Activated CD8-positive, alpha-beta T cell treated with anti-CD3 and anti-CD28 coated beads, Interleukin-2, amount 10 ng/mL, durations not matched to agents 7 days and 5 days (primary cell): ENCODE measurements at regions of chr4 and their contacts with region 1.

Region 1: DNA sequence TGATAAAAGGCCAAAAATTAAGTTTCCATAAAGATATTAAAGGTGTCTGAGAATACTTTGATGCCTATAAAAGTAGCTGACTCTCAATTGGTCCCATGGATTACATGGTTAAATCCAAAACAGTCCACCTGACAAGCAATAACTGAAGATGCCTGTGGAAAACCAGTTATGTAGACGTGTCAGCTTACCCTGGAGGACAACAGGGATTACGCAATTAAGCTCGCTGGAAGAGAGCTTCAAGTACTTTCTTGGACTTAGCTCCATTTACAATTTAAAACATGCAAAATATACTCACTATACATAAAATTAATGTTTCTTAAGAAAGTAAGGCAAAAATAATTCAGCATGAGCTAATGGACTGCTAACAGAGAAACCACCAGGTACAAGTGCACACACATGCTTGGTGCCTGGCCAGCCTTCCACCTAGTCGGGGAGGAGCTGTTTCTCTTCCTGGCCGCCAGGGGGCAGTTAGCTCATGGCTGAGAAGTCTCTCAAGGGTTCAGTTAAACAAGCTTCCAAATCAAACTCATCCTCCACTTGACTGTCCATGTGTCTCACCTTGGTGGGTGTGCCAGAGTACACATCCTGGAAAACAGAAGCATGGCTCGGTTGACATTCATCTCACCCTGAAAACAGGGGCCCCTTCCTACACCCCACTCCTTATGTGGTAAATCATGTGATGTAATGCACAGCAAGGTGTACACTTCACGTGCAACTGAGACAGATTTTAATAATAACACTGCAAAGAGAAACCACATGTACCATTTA is 9.2 kb upstream of the FAM53A start:
- DNase-seq: peak; percentile 84
- ATAC-seq: peak; percentile 95
- H3K4me3 Mint-ChIP-seq: no peak overlapping the region
- H3K27ac Mint-ChIP-seq: peak overlapping the region; percentile 54
- H3K4me1 Mint-ChIP-seq: peaks cover 10% of the 10 kb centered on the region
- H3K27me3 Mint-ChIP-seq: no peaks in the 10 kb centered on the region

Region 2: DNA sequence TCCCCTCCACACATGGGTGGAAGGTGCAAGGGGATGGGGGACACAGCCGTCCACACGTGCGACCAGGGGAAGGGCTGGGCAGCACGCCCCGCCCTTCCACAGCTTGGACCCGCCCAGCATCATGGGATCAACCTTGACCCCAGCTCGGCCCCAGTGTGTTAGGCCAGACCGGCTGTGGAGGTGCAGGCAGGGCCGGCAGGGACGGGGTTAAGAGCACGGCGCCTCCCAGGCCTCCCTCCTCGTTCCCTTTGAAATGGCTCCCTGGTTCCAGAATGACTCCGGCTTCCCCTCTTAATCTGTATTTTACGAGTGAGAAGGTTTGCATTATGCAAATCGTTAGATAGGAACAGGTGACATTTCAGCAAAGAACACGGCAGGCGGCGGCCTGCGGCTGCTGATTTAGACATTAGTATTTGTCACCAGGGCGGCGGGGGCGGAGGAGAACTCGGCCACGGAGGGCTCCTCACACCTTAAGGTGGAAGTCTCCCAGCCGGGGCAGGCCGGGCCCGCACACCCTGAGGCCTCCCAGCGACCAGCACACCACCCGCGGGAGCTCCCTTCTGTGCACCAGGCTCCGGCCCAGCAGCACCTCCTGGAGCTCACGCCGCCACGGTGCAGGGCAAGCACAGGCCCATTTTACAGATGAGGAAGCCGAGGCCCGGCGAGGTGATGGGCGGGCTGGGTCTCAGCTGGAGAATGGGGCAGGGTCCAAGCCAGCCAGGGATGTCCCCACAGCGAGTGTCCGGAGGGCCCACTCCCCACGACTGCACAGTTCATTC is 125.3 kb before region 1 on chr4:
- CTCF ChIA-PET with region 1: no interaction called
- POLR2A ChIA-PET with region 1: no interaction called
- DNase-seq: no peak
- ATAC-seq: no peak
- H3K4me3 Mint-ChIP-seq: no peak overlapping the region
- H3K27ac Mint-ChIP-seq: no peak overlapping the region
- H3K4me1 Mint-ChIP-seq: peaks cover 3% of the 10 kb centered on the region
- H3K27me3 Mint-ChIP-seq: no peaks in the 10 kb centered on the region

Region 3: DNA sequence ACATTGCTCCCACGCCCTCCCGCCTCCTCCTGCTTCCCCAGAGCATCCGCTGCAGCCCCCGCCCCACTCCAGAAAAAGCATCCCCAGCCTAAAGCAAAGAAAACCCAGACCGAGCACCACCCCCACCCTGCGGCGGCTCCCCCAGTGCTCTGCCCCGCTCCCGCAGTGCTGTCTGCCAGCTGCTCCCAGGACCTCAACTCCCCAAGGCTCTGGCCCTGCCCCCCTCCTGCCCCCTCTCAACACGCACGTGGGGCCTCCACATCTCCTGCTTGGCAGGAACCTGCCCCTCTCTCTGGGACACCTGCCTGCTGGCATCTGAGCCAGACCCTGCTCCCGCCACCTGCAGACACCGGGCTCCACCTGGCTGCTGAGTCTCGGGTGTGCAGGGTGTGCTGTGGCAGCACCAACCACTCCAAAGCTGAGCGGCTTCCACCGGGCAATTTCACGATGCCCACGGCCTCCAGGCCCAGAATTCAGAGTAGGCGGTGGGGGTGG is 88.6 kb before region 1 on chr4:
- CTCF ChIA-PET with region 1: interaction called, 10 read pairs
- POLR2A ChIA-PET with region 1: no interaction called
- DNase-seq: peak; percentile 72
- ATAC-seq: peak; percentile 75
- H3K4me3 Mint-ChIP-seq: peak overlapping the region; percentile 72
- H3K27ac Mint-ChIP-seq: peak overlapping the region; percentile 90
- H3K4me1 Mint-ChIP-seq: peaks cover 21% of the 10 kb centered on the region
- H3K27me3 Mint-ChIP-seq: no peaks in the 10 kb centered on the region

Region 4: DNA sequence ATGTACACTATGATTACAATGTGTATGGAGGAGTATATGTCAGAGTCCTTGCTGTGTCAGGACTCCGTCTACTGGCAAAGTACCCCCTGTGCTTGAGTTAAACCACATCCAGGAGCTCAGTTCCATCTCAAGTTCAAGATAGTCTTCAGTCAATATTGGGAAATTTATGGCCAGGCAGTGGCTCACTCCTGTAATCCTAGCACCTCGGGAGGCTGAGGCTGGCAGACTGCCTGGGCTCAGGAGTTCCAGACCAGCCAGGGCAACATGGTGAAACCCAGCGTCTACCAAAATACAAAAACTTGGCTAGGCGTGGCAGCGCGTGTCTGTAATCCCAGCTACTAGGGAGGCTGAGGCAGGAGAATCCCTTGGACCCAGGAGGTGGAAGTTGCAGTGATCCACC is 13.0 kb after region 1 on chr4:
- CTCF ChIA-PET with region 1: interaction called, 131 read pairs
- POLR2A ChIA-PET with region 1: interaction called, 17 read pairs
- DNase-seq: no peak
- ATAC-seq: no peak
- H3K4me3 Mint-ChIP-seq: no peak overlapping the region
- H3K27ac Mint-ChIP-seq: no peak overlapping the region
- H3K4me1 Mint-ChIP-seq: peaks cover 73% of the 10 kb centered on the region
- H3K27me3 Mint-ChIP-seq: no peaks in the 10 kb centered on the region

Region 5: DNA sequence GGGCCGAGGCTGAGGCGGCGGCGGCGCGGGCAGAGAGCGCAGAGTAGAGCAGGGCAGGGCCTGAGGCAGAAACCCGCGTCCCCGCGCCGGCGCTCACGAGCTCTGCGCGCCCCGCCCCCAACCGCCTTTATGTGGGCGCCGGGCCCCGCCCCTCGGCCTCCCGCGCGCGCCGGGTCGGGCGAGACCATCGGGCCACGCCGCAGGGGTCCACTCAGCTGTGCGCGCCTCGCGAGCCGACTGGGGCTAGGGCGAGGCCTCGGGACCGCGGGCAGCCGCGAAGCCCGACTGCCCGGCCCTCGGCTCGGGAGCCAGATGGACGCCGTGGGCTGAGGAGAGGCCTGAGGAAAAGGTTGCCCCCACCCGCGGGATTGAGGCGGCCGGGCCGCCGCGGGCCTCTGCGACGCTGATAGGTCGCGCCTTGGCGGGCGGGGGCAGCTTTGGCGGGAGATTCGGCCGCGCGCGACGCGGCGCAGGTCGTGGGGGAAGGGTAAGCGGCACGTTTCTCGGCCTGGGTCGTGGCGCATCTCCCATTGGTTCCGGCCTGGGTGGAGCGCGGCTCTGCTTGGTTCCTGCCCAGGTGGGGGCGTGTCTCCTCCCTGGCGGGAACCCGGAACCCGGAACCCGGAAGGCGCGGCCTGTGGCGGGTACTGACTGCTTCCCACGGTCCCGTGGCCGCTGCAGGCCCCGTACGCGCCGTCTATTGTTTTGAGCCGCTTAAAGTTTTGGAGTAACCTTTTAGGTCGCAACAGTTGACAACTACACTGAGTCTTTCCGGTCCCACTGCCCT is 19.1 kb after region 1 on chr4 and contains the start of gene SLBP:
- CTCF ChIA-PET with region 1: interaction called, 131 read pairs
- POLR2A ChIA-PET with region 1: interaction called, 17 read pairs
- DNase-seq: peak; percentile 99
- ATAC-seq: peak; percentile 90
- H3K4me3 Mint-ChIP-seq: peak within 1 kb of the TSS; percentile 99
- H3K27ac Mint-ChIP-seq: peak within 1 kb of the TSS; percentile 99
- H3K4me1 Mint-ChIP-seq: peaks cover 75% of the 10 kb centered on the region
- H3K27me3 Mint-ChIP-seq: no peaks in the 10 kb centered on the region
- total RNA-seq, gene SLBP: 132 to 136 TPM

Region 6: GRCh38 chr4:1721004-1721665 is 27.8 kb after region 1 on chr4 and contains the starts of genes TACC3 and TMEM129:
- CTCF ChIA-PET with region 1: interaction called, 227 read pairs
- POLR2A ChIA-PET with region 1: interaction called, 6 read pairs
- DNase-seq: peak; percentile 97
- ATAC-seq: peak; percentile 85
- H3K4me3 Mint-ChIP-seq: peak within 1 kb of the TSS; percentile 98
- H3K27ac Mint-ChIP-seq: peak within 1 kb of the TSS; percentile 98
- H3K4me1 Mint-ChIP-seq: peaks cover 53% of the 10 kb centered on the region
- H3K27me3 Mint-ChIP-seq: no peaks in the 10 kb centered on the region
- total RNA-seq, gene TACC3: 284 to 311 TPM
- total RNA-seq, gene TMEM129: 21.9 to 22.4 TPM

Region 7: GRCh38 chr4:1746265-1746691 is 53.0 kb after region 1 on chr4:
- CTCF ChIA-PET with region 1: interaction called, 12 read pairs
- POLR2A ChIA-PET with region 1: no interaction called
- DNase-seq: peak; percentile 88
- ATAC-seq: peak; percentile 78
- H3K4me3 Mint-ChIP-seq: no peak overlapping the region
- H3K27ac Mint-ChIP-seq: no peak overlapping the region
- H3K4me1 Mint-ChIP-seq: peaks cover 2% of the 10 kb centered on the region
- H3K27me3 Mint-ChIP-seq: no peaks in the 10 kb centered on the region

Region 8: DNA sequence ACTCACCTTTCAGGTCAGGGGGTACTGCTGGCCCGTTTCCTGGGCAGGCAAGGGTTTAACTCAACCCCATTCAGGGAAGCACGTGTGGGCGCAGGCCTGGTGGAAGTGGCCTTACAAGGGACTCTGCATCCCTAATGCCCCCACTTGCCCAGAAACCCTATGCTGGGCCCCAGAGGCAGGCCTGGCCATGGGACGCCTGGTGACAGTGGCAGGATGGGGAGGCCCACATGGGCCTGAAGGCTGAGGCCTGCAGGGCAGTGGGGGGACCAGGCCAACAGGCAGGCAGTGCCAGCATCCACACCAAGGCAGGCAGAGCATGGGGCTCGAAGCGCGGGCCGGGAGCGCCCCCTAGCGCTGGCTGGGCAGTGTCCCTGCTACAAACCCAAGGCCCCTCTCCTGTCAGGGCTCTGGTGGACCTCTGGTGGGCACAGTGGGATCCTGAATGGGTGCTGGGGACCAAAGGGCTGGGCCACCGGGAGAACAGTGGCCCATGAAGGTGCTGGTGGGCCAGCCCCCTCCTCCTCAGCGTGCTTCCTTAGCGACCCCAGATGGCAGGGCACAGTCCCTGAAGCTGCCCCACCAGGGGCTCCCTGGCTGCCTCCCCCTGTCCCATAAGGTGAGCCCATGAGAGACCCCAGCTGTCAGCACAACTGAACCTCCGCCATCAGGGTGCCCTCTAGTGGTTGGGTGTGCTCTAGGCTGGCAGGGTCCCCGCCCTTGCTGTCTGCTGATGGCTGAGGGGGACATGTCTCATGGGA is 116.6 kb after region 1 on chr4:
- CTCF ChIA-PET with region 1: interaction called, 18 read pairs
- POLR2A ChIA-PET with region 1: no interaction called
- DNase-seq: peak; percentile 75
- ATAC-seq: peak; percentile 88
- H3K4me3 Mint-ChIP-seq: no peak overlapping the region
- H3K27ac Mint-ChIP-seq: no peak overlapping the region
- H3K4me1 Mint-ChIP-seq: no peaks in the 10 kb centered on the region
- H3K27me3 Mint-ChIP-seq: no peaks in the 10 kb centered on the region